Breast epithelium (tissue), 4 donors: ENCODE measurements at regions of chr10 and their contacts with region 1.

Region 1: DNA sequence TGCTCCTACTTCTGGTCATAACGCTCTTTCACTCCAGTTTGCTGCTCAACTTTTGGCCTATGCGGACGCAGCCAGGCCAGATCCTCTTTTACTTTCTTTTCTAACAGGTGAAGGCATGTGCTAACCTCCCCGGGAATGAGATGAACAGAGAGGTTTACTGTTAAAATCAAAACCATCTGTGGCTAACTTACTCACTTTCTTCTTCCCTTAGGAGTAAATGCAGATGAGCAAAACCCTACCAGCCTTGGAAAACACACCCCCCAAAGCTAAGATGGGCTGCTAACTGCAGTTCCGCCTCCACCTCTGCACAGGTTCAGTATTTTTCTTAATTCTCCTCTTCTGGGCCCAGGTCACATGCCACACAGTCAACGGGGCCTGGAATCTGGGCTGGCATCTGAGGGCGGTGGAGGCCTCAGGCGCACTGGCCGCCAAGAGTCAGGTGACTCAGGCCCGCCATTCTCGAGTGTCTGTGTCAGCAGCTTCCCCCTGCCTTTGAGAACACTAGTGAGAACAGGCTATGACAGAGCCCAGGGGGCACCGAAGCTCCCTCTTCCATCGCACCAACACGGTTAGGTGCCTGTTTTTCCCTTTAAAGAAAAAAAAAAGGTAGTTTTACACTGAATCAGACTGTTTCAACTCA is 11.1 kb downstream of the FAM53B start:
- DNase-seq: peak in 1 of 2 donors; percentile 76
- H3K4me3 ChIP-seq: peak overlapping the region in 1 of 3 donors; percentile 0
- H3K27ac ChIP-seq: peak overlapping the region; percentile 64 to 73
- H3K4me1 ChIP-seq: peaks cover 11 to 29% of the 10 kb centered on the region in 2 donors
- H3K27me3 ChIP-seq: no peaks in the 10 kb centered on the region
- CTCF ChIP-seq: no peak
- POLR2A ChIP-seq: no peak

Region 2: DNA sequence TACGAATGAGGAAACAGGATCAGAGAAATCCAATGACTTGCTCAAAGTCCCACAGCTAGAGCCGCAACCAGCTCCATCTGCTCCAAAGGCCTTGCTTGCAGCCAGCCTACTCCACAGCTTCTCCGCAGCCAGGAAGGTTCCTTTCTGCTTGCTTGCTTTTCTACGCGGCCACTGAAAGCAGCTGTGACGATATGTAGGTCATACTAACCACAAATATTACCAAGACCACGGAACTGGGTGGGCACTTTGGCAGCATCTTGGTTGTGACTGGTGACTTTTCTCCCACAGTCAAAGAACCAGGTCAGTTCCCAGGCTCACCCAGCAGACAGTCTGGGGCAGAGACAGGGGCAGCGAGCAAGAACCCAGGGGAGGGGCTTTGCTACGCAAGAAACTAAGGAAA is 75.2 kb before region 1 on chr10:
- intact Hi-C with region 1: loop called (anchors 10 kb)
- DNase-seq: peak in 1 of 2 donors; percentile 53
- H3K4me3 ChIP-seq: no peak overlapping the region
- H3K27ac ChIP-seq: peak overlapping the region; percentile 16 to 53
- H3K4me1 ChIP-seq: peaks cover 6 to 23% of the 10 kb centered on the region in 2 donors
- H3K27me3 ChIP-seq: no peaks in the 10 kb centered on the region
- CTCF ChIP-seq: no peak
- POLR2A ChIP-seq: no peak

Region 3: DNA sequence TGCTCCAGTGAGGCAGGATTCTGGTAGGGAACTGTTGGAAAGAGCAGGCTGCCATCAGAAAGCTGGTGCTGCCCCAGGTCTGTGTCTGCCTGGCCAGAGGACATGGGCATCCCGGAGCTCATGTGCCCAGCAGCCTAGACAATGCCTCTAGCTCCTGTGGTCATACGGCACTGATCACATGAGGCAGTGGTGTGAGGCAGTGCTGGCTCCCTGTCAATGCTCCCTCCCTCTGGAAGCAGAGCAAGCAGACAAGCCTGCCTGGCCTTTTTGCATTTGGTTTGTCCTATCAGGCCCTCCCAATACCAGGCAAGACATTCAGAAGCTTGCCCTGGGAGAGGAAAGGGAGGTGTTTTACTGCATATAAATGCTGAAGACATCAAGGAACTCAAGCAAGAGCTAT is 1062.1 kb after region 1 on chr10:
- intact Hi-C with region 1: no loop called
- DNase-seq: no peak
- H3K4me3 ChIP-seq: no peak overlapping the region
- H3K27ac ChIP-seq: no peak overlapping the region
- H3K4me1 ChIP-seq: no peaks in the 10 kb centered on the region
- H3K27me3 ChIP-seq: no peaks in the 10 kb centered on the region
- CTCF ChIP-seq: no peak
- POLR2A ChIP-seq: no peak